Head of caudate nucleus (tissue), 42 donors: ENCODE measurements at regions of chr15 and their contacts with region 1.

Region 1: GRCh38 chr15:34914317-34914716 is 55.2 kb downstream of the AQR start:
- DNase-seq: no peak

Region 2: DNA sequence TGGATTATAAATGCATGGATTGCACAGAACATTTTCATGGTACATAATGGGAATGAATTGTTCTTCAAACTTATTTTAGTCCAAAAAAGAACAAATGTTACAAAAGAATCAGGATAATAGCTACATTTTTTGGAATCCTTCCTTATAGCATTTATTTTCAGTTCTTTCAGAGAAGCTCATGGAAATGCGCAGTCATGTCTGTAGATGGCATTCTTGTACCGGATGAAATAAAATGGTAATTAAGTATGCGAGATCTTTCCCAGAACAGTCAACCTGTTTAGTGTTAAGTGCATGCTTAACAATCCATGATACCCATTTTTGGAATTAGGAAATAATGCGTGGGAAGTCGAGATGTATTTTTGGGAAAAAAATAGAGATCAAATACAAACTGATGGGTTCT is 292.6 kb before region 1 on chr15:
- intact Hi-C with region 1: loop called (anchors 10 kb)
- DNase-seq: peak in 5 of 42 donors; percentile 5 to 36 (median 17)

Region 3: DNA sequence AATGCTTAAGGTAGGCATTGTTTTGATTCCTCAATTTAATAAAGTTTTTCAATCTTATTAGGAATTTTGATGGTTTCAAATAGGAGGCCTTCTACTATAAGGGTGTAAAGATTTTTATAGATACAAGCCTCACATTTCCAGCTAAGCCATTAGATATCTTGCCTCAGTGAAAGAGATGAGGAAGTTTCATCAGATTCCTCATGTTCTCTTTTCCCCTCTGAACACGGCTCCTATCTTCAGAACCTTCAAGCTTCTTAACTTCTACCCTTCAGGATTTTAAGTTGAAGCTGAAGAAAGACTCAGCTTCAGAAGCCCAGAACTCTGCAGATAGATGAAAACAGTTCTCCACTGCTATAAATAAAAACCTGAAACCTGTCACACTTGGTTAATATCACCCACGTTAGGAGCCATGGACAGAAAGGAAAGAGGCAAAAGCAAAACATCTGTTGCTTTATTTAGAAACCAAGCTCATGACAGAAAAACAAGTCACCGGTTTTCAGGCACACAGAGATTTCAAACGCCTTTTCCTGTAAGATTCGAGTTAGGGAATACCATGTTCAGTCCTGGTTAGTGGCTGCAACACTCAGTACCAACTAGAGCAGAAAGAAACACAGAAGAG is 248.7 kb before region 1 on chr15:
- intact Hi-C with region 1: no loop called
- DNase-seq: no peak

Region 4: GRCh38 chr15:34969340-34970097 is 55.2 kb after region 1 on chr15 and contains the start of gene AQR:
- intact Hi-C with region 1: no loop called
- DNase-seq: peak; percentile 92 to 99 (median 97)

Region 5: GRCh38 chr15:35130245-35130644 is 215.9 kb after region 1 on chr15:
- intact Hi-C with region 1: no loop called
- DNase-seq: no peak